Pancreas (tissue), 10 donors: ENCODE measurements at regions of chr10 and their contacts with region 1.

Region 1: GRCh38 chr10:4767033-4767814 is 58.8 kb upstream of the AKR1E2 start:
- DNase-seq: no peak
- ATAC-seq: peak in 3 of 4 donors; percentile 59 to 69 (median 68)
- H3K4me3 ChIP-seq: no peak overlapping the region
- H3K27ac ChIP-seq: no peak overlapping the region
- H3K4me1 ChIP-seq: peaks cover 0 to 5% (median 4%) of the 10 kb centered on the region in 3 donors
- H3K27me3 ChIP-seq: no peaks in the 10 kb centered on the region
- CTCF ChIP-seq: peak; percentile 12 to 37 (median 24)

Region 2: GRCh38 chr10:3208481-3209406 is 1558.5 kb before region 1 on chr10:
- intact Hi-C with region 1: loop called in 2 of 3 experiments (anchors 10 kb)
- DNase-seq: no peak
- ATAC-seq: no peak
- H3K4me3 ChIP-seq: no peak overlapping the region
- H3K27ac ChIP-seq: no peak overlapping the region
- H3K4me1 ChIP-seq: no peaks in the 10 kb centered on the region
- H3K27me3 ChIP-seq: peaks cover 0 to 6% (median 0%) of the 10 kb centered on the region in 4 donors
- CTCF ChIP-seq: no peak

Region 3: DNA sequence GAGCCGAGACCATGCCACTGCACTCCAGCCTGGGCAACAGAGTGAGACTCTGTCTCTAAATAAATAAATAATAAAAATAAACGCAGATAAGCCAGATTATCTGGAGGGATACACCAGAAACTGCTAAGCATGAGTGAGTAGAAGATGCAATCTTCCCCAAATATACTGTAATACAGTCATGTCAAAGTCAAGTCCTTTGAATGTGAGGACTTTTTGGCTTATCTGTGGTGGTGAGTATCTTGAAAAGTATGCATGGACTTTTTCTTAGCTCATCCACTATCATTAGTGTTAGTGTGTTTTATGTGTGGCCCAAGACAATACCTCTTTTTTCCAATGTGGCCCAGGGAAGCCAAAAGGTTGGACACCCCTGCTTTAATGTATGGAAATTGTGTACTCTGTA is 1549.9 kb before region 1 on chr10:
- intact Hi-C with region 1: loop called in 1 of 3 experiments (anchors 10 kb)
- DNase-seq: no peak
- ATAC-seq: no peak
- H3K4me3 ChIP-seq: no peak overlapping the region
- H3K27ac ChIP-seq: no peak overlapping the region
- H3K4me1 ChIP-seq: no peaks in the 10 kb centered on the region
- H3K27me3 ChIP-seq: no peaks in the 10 kb centered on the region
- CTCF ChIP-seq: no peak